ENCODE measurements at regions of chr19 and their contacts with region 1.

Region 1: GRCh38 chr19:5904352-5905113 is at the start of gene VMAC:
- DNase-seq: peak; percentile 95 to 100 (median 99)

Region 2: GRCh38 chr19:5790573-5791520 is 113.7 kb before region 1 on chr19 and contains the start of gene DUS3L:
- intact Hi-C with region 1: loop called (anchors 2 kb)
- DNase-seq: peak; percentile 93 to 99 (median 97)

Region 3: DNA sequence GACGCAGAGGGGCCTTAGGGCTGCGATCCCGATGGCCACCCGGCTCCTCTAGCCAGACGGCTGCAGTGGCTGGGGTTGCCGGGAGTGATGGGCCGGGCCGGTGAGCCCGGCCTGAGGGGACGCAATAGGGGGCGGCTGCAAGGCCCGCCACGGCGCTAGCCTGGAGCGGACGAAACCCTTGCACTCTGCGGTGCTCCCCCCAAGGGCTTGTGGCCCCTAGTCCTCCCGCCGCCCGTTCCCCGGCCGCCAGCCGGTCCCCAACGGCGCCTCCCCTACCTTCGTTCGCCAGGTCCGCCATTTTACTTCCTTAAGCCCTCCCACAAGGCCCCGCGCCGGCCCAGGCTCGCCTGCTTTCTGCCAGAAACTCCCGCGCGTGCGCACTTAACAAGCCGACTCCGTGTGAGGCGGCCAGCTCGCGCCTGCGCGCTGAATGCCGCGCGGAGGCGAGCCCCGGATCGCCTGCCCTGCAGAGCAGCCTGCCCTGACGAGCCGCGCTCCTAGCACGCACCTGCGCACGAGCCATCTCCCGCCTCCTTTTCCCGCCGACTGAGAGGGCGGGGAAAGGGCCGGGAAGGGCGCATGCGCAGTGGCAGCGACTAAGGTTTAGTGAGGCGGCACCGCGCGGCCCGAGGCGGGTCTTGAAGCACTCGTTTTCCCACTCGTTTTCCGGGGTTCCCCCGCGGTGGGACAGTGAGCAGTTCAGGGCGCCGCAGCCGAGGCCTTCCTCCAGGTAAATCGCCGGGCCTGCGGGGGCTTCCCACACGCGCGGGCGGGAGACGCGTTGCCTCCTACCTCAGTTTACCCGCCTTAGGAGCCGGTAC is 73.5 kb after region 1 on chr19 and contains the start of gene RANBP3:
- intact Hi-C with region 1: loop called (anchors 5 kb)
- DNase-seq: peak; percentile 90 to 99 (median 97)

Measured in head of caudate nucleus (tissue), 42 donors.